ENCODE measurements at regions of chr2 and their contacts with region 1.

Region 1: DNA sequence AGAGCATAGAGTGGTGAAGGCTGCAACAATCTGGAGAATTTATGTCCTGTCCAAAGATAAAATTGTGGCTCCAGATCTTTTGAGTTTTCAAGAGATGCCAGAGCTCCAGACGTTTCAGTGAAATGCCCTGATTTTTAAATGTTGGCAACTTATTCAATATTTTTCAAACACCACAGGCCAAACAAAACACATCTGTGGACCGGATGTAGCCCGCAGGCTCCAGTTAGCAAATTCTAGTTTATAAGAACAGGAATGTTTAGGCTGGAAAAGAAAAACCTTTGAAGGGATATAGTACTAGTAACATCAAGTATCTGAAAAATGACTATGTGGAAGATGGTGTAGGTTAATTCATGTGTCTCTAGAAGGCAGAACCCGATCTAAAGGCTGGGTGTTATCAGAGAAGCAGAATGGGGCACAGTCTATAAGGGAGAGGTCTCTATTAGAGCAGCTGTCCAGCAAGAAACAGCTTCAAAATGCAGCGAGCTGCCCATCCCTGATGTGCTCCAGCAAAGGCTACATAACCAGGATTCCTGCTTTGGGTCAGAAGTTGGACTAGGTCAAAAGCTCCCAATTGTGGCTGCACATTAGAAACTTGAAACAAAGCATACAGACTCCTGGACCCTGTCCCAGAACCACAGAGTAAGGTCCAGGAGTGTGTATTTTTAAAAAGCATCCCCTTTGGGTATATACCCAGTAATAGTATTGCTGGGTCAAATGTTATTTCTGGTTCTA is 105.9 kb downstream of the ANKRD44 start:
- DNase-seq: no peak
- ATAC-seq: no peak
- H3K4me3 ChIP-seq: no peak overlapping the region
- H3K4me3 Mint-ChIP-seq: peak overlapping the region; percentile 61
- H3K27ac ChIP-seq: peak overlapping the region; percentile 76 to 84
- H3K27ac Mint-ChIP-seq: peak overlapping the region; percentile 98
- H3K4me1 ChIP-seq: peaks cover 84% of the 10 kb centered on the region
- H3K4me1 Mint-ChIP-seq: peaks cover 92% of the 10 kb centered on the region
- H3K27me3 ChIP-seq: no peaks in the 10 kb centered on the region
- H3K27me3 Mint-ChIP-seq: no peaks in the 10 kb centered on the region
- CTCF ChIP-seq: no peak

Region 2: DNA sequence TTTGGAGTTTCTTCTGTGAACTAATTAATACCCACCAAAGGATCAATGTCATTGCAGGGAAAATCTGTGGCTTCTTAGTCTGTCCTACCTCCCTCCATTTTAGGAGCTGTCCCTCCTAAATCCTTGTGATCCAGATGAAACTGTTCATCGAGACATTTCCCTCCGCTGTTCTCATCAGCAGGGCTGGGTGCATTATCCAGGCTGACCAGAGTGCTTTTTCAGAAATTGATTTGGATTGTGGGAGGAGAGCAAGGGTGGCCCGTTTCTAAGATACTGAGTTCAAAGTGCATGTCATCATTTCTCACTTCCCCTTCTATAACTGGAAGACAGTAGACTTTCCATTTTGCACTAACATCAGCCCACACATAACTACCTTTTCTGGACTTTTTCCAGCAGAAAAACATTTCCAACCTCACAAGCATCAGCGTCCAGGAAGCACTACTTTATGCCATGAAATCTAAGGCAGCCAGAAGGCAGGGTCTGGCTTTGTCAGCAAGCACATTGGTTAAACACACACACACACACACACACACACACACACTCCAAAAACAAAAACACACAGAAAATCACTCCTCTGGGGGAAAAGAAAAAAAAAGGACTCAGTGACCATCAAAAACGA is 11.8 kb after region 1 on chr2:
- CTCF ChIA-PET with region 1: interaction called, 5 read pairs
- POLR2A ChIA-PET with region 1: interaction called, 216 read pairs
- intact Hi-C with region 1: loop called (anchors 1 to 2 kb)
- DNase-seq: peak in 1 of 14 experiments; percentile 38
- ATAC-seq: peak; percentile 14
- H3K4me3 ChIP-seq: no peak overlapping the region
- H3K4me3 Mint-ChIP-seq: peak overlapping the region; percentile 63
- H3K27ac ChIP-seq: peak overlapping the region; percentile 33 to 62
- H3K27ac Mint-ChIP-seq: peak overlapping the region; percentile 98
- H3K4me1 ChIP-seq: peaks cover 57% of the 10 kb centered on the region
- H3K4me1 Mint-ChIP-seq: peaks cover 89% of the 10 kb centered on the region
- H3K27me3 ChIP-seq: no peaks in the 10 kb centered on the region
- H3K27me3 Mint-ChIP-seq: no peaks in the 10 kb centered on the region
- CTCF ChIP-seq: no peak

Region 3: DNA sequence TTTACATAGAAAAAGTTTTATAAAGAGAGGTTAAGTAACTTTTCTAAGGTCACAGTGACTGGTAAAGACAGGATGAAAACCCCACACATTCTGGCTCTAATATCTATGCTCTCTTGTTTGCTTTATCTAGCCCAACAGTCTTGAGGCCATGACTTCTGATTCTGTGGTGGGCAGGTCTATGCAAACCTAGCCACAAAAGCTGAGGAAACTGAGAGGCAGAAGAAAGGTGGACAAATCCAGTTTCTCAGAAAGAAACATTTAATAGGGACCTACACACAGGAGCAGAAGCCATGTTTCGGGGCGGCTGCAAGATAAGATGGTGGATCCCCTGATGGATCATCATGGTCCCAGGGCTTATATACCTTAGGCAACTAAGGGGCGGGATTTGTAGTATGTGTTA is 273.1 kb after region 1 on chr2:
- CTCF ChIA-PET with region 1: no interaction called
- POLR2A ChIA-PET with region 1: no interaction called
- intact Hi-C with region 1: no loop called
- DNase-seq: no peak
- ATAC-seq: no peak
- H3K4me3 ChIP-seq: no peak overlapping the region
- H3K4me3 Mint-ChIP-seq: no peak overlapping the region
- H3K27ac ChIP-seq: no peak overlapping the region
- H3K27ac Mint-ChIP-seq: no peak overlapping the region
- H3K4me1 ChIP-seq: no peaks in the 10 kb centered on the region
- H3K4me1 Mint-ChIP-seq: no peaks in the 10 kb centered on the region
- H3K27me3 ChIP-seq: no peaks in the 10 kb centered on the region
- H3K27me3 Mint-ChIP-seq: no peaks in the 10 kb centered on the region
- CTCF ChIP-seq: no peak